Sciatic nerve (tissue), 2 donors: ENCODE measurements at regions of chr5 and their contacts with region 1.

Region 1: DNA sequence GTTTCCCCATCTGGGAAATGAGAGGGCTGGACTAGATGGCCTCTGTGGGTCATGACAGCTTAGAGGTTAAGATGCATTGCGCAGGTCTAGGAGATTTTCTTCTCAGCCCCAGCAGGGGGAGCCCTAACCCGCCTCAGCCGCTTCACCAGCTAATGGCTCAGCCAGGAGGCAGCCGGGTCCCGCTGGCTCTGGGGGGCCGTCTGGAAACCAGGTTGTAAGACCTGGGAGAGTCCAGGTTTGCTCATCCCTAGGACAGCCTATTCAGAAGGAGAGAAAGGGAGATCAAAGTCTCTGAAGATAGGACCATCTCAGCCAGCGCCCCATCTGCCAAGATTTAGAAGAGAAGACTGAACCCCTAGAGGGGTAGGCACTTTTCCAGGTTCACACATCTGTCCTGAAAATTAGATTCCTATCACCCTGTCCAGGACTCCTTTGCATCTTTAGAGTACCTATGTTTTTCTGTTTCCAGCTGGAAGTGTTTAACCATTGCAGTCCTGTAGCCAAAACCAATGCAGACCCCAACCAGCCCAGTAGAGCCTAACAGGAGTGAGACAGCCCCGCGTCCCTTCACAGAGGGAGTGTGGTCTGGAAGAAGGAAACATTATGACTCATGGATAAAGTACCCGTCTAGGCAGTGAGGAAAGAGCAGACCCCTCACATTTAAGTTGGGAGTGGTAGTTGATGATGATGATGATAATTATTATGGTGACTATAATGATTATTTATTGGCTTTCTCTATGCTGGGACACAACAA is 27.5 kb downstream of the SPARC start:
- DNase-seq: peak; percentile 93
- ATAC-seq: peak; percentile 91

Region 2: GRCh38 chr5:151447174-151448037 is 211.8 kb before region 1 on chr5 and contains the start of gene SLC36A1:
- intact Hi-C with region 1: loop called (anchors 10 kb)
- DNase-seq: peak; percentile 98
- ATAC-seq: peak; percentile 97
- total RNA-seq, gene SLC36A1: 24.9 TPM

Region 3: GRCh38 chr5:151682751-151683331 is 23.7 kb after region 1 on chr5:
- intact Hi-C with region 1: loop called (anchors 1 kb)
- DNase-seq: no peak
- ATAC-seq: no peak

Region 4: GRCh38 chr5:151740336-151740942 is 81.3 kb after region 1 on chr5:
- intact Hi-C with region 1: loop called (anchors 2 kb)
- DNase-seq: peak; percentile 75
- ATAC-seq: peak; percentile 87